ENCODE measurements at regions of chr6 and their contacts with region 1.

Region 1: GRCh38 chr6:129370268-129370916 is 339.6 kb downstream of the ARHGAP18 start:
- DNase-seq: no peak
- ATAC-seq: no peak
- H3K4me3 Mint-ChIP-seq: no peak overlapping the region
- H3K27ac Mint-ChIP-seq: no peak overlapping the region
- H3K4me1 Mint-ChIP-seq: no peaks in the 10 kb centered on the region
- H3K27me3 Mint-ChIP-seq: peaks cover 2% of the 10 kb centered on the region
- CTCF ChIP-seq: no peak

Region 2: GRCh38 chr6:127737009-127737486 is 1633.3 kb before region 1 on chr6:
- CTCF ChIA-PET with region 1: interaction called, 4 read pairs
- POLR2A ChIA-PET with region 1: no interaction called
- intact Hi-C with region 1: loop called (anchors 1 kb)
- DNase-seq: no peak
- ATAC-seq: no peak
- H3K4me3 Mint-ChIP-seq: no peak overlapping the region
- H3K27ac Mint-ChIP-seq: no peak overlapping the region
- H3K4me1 Mint-ChIP-seq: peaks cover 1% of the 10 kb centered on the region
- H3K27me3 Mint-ChIP-seq: no peaks in the 10 kb centered on the region
- CTCF ChIP-seq: no peak

Region 3: DNA sequence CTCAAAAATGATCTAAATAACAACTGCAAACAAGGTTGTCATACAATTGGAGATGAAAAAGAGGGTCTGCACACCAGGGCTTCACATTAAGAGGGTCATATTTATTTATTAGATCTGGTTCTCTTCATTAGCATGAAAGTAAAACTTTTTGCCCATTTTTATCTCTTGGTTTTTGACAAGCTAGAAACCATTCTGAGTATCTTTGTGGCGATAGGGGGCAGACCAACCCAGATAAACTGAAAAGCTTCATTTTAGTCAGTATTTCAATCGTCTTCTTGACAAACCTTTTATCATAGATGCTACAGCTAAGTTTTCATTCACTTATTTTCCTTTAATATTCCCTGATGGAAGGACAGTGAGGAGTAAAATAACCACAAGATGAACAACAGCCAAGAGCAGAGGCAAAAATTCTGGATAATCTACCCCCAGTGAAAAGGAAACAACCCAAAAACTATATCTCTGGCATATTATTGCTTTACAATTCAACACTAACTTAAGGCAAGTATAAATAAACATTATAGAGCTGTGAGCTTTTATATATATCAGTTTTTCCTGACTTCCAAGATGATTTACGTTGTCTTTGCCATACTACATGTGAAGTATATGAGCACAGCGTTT is 1514.7 kb before region 1 on chr6:
- CTCF ChIA-PET with region 1: no interaction called
- POLR2A ChIA-PET with region 1: no interaction called
- intact Hi-C with region 1: loop called (anchors 5 kb)
- DNase-seq: no peak
- ATAC-seq: no peak
- H3K4me3 Mint-ChIP-seq: no peak overlapping the region
- H3K27ac Mint-ChIP-seq: no peak overlapping the region
- H3K4me1 Mint-ChIP-seq: no peaks in the 10 kb centered on the region
- H3K27me3 Mint-ChIP-seq: no peaks in the 10 kb centered on the region
- CTCF ChIP-seq: no peak

Region 4: GRCh38 chr6:128725271-128726233 is 644.8 kb before region 1 on chr6:
- CTCF ChIA-PET with region 1: interaction called, 7 read pairs
- POLR2A ChIA-PET with region 1: no interaction called
- intact Hi-C with region 1: loop called (anchors 1 kb)
- DNase-seq: no peak
- ATAC-seq: no peak
- H3K4me3 Mint-ChIP-seq: no peak overlapping the region
- H3K27ac Mint-ChIP-seq: no peak overlapping the region
- H3K4me1 Mint-ChIP-seq: no peaks in the 10 kb centered on the region
- H3K27me3 Mint-ChIP-seq: no peaks in the 10 kb centered on the region
- CTCF ChIP-seq: peak; percentile 52

Region 5: GRCh38 chr6:128807577-128807976 is 562.8 kb before region 1 on chr6:
- CTCF ChIA-PET with region 1: interaction called, 6 read pairs
- POLR2A ChIA-PET with region 1: no interaction called
- intact Hi-C with region 1: loop called (anchors 2 kb)
- DNase-seq: no peak
- ATAC-seq: no peak
- H3K4me3 Mint-ChIP-seq: no peak overlapping the region
- H3K27ac Mint-ChIP-seq: no peak overlapping the region
- H3K4me1 Mint-ChIP-seq: no peaks in the 10 kb centered on the region
- H3K27me3 Mint-ChIP-seq: no peaks in the 10 kb centered on the region
- CTCF ChIP-seq: no peak

Region 6: DNA sequence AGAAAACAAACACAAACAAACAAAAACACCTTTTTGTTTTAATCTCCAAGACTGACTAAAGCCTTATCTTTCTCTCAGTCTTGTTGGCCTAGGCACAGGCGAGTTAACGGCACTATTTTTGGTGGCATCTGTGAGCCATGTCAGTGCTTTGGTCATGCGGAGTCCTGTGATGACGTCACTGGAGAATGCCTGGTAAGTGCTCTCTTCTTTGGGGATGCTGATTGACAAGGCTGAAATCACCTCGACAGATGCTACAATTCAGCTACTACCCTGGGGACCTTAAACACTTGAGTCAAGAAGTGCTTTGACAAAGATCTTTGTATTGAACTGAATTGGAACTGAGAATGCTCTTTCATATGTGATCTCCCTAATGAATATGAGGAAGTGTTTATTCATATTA is 103.4 kb before region 1 on chr6:
- CTCF ChIA-PET with region 1: no interaction called
- POLR2A ChIA-PET with region 1: no interaction called
- intact Hi-C with region 1: no loop called
- DNase-seq: no peak
- ATAC-seq: no peak
- H3K4me3 Mint-ChIP-seq: no peak overlapping the region
- H3K27ac Mint-ChIP-seq: no peak overlapping the region
- H3K4me1 Mint-ChIP-seq: no peaks in the 10 kb centered on the region
- H3K27me3 Mint-ChIP-seq: no peaks in the 10 kb centered on the region
- CTCF ChIP-seq: no peak

Measured in activated B cell treated with CpG ODN at 0.5 μM for 24 hours (primary cell).